Activated B cell treated with CpG ODN at 0.5 μM for 24 hours (primary cell): ENCODE measurements at regions of chr5 and their contacts with region 1.

Region 1: DNA sequence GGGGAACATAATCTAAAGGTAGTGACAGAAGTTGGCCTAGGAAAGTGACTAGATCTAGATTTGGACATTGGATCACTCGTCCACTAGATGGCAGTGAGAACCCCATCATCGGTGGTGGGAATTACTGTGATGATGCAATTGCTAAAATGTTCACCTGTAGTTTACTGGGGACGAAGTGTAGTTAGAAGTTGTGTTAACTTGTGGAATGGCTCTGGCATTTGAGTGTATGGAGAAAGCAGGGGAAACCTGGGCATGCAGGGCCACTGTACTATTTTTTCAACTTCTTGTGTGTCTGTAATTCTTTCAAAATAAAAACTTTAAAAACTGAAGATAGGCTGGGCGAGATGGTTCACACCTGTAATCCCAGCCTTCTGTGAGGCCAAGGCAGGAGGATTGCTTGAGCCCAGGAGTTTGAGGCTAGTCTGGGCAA is 75.5 kb downstream of the PHAX start:
- DNase-seq: peak; percentile 19
- ATAC-seq: peak; percentile 82
- H3K4me3 Mint-ChIP-seq: no peak overlapping the region
- H3K27ac Mint-ChIP-seq: peak overlapping the region; percentile 4
- H3K4me1 Mint-ChIP-seq: peaks cover 3% of the 10 kb centered on the region
- H3K27me3 Mint-ChIP-seq: no peaks in the 10 kb centered on the region
- CTCF ChIP-seq: peak; percentile 67

Region 2: DNA sequence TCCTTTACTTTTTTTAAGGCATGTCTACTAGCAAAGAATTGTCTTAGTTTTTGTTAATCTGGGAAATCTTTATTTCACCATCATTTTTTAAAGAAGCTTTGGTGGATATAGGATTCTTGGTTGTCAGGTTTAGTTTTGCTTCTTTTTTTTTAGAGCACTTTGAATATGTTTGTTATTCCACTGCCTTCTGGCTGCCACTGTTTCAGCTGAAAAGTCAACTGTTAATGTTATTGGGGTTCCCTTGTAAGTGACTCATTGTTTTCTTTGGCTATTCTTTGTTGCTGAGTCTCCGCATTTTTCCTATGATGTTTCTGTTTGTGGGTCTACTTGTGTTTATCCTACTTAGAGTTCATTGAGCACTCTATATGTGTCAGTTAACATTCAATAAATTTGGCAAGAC is 31.1 kb before region 1 on chr5:
- CTCF ChIA-PET with region 1: no interaction called
- POLR2A ChIA-PET with region 1: no interaction called
- intact Hi-C with region 1: no loop called
- DNase-seq: no peak
- ATAC-seq: no peak
- H3K4me3 Mint-ChIP-seq: no peak overlapping the region
- H3K27ac Mint-ChIP-seq: no peak overlapping the region
- H3K4me1 Mint-ChIP-seq: no peaks in the 10 kb centered on the region
- H3K27me3 Mint-ChIP-seq: no peaks in the 10 kb centered on the region
- CTCF ChIP-seq: no peak

Region 3: DNA sequence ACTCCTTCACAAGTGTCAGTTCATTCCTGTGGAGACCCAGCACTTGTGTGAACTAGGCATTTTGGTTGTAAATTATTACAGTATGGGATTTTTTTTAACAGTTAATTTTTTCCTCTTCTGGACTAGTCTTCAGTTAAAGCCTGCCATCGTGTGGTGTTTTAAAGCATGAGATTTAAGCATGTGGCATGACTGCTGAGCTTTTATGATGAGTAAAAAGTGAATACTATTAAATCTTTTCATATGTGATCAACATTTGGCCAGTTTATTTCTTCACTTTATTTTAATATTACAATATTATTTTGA is 125.7 kb after region 1 on chr5:
- CTCF ChIA-PET with region 1: interaction called, 47 read pairs
- POLR2A ChIA-PET with region 1: interaction called, 3 read pairs
- intact Hi-C with region 1: loop called (anchors 1 kb)
- DNase-seq: no peak
- ATAC-seq: peak; percentile 28
- H3K4me3 Mint-ChIP-seq: no peak overlapping the region
- H3K27ac Mint-ChIP-seq: no peak overlapping the region
- H3K4me1 Mint-ChIP-seq: peaks cover 37% of the 10 kb centered on the region
- H3K27me3 Mint-ChIP-seq: no peaks in the 10 kb centered on the region
- CTCF ChIP-seq: no peak